HEK293T (cell line): ENCODE measurements at regions of chr3 and their contacts with region 1.

Region 1: GRCh38 chr3:194671900-194672808 is at the start of gene LSG1:
- DNase-seq: peak; percentile 82

Region 2: DNA sequence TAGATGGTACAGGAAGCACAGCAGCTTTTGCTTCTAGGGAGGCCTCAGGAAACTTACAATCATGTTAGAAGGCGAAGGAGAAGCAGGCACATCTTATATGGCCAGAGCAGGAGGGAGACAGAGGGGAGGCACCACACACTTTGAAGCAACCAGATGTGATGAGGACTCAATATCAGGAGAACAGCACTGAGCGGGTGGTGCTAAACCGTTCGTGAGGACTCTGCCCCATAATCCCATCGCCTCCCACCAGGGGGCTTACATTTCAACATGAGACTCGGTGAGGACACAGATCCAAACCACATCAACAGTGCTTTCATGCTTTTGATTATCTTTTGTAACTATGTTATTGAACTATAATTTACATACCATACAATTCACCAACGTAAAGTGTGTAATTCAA is 31.3 kb before region 1 on chr3:
- CTCF ChIA-PET with region 1: no interaction called
- POLR2A ChIA-PET with region 1: no interaction called
- DNase-seq: no peak

Region 3: DNA sequence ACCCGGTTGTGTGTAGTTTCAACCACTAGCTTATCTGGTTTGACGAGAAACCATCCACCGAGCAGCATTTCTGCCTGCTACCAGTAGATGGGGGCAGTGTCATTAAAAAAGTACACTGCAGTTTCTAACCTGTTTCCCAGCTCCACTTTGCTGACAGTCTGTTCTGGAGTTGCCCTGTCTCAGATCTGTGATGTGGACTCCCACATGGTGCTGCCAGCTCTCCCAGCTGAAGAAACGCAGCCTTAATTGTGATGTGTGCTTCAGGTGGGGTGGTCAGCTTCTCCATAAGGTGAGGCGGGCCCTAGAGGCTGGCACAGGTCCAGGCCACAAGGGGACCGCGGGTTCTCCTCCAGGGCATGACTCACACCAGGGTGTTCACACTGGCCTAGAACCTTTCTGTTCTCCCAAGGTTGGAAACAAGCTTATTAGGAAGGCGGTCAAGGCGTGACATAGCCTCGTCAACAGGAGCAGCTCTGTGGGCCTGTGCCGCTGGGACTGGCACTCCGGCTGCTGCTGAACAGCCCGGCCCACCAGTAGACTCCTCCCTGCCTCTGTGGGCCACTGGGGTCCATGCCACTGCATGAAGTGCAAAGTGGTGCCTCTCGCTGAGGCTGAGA is 10.6 kb after region 1 on chr3:
- CTCF ChIA-PET with region 1: interaction called, 13 read pairs
- POLR2A ChIA-PET with region 1: interaction called, 8 read pairs
- DNase-seq: peak; percentile 58